Activated naive CD4-positive, alpha-beta T cell treated with anti-CD3 and anti-CD28 coated beads, Interleukin-2, amount 10 ng/mL, durations not matched to agents 7 days and 5 days (primary cell): ENCODE measurements at regions of chr3 and their contacts with region 1.

Region 1: GRCh38 chr3:30042274-30042859 is 564.0 kb upstream of the TGFBR2 start:
- DNase-seq: peak; percentile 76
- H3K4me3 Mint-ChIP-seq: no peak overlapping the region
- H3K27ac Mint-ChIP-seq: no peak overlapping the region
- H3K4me1 Mint-ChIP-seq: peaks cover 4% of the 10 kb centered on the region
- H3K27me3 Mint-ChIP-seq: peaks cover 18% of the 10 kb centered on the region

Region 2: GRCh38 chr3:29955413-29955812 is 87.0 kb before region 1 on chr3:
- CTCF ChIA-PET with region 1: no interaction called
- DNase-seq: no peak
- H3K4me3 Mint-ChIP-seq: no peak overlapping the region
- H3K27ac Mint-ChIP-seq: no peak overlapping the region
- H3K4me1 Mint-ChIP-seq: no peaks in the 10 kb centered on the region
- H3K27me3 Mint-ChIP-seq: peaks cover 6% of the 10 kb centered on the region

Region 3: DNA sequence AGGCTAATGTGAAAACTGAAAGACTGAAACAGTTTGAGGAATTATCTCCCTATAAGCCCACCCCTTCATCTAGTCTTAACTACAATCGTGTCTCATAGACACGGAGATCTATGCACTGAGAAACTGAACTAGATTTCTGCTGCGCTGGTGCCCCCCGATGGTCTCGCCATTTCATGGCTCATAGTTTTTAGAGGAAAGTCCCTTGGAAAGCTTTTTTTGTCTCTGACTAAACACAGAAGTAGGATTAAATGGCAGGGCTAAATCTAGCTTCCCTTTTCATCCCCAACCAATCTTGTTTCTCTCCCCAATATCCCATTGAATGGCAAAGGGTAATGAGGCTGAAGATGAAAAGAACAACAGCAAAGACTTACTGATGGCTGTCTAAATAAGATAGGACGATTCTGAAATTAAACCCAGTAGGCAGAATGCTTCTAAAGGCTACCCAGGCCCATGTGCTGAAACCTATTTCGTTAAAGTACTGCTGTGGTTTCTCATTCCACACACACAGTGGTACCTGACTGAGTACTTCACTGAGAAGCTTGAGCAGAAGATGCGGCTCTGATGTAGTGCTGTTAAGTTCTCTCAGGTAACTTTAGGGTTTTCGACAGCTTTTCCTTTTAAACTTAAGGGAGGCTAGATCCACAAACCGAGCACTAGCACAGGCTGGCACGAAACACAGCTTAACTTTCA is 709.4 kb after region 1 on chr3:
- CTCF ChIA-PET with region 1: interaction called, 27 read pairs
- DNase-seq: peak; percentile 68
- H3K4me3 Mint-ChIP-seq: no peak overlapping the region
- H3K27ac Mint-ChIP-seq: no peak overlapping the region
- H3K4me1 Mint-ChIP-seq: peaks cover 4% of the 10 kb centered on the region
- H3K27me3 Mint-ChIP-seq: no peaks in the 10 kb centered on the region